GM12878 (cell line): ENCODE measurements at regions of chr3 and their contacts with region 1.

Region 1: DNA sequence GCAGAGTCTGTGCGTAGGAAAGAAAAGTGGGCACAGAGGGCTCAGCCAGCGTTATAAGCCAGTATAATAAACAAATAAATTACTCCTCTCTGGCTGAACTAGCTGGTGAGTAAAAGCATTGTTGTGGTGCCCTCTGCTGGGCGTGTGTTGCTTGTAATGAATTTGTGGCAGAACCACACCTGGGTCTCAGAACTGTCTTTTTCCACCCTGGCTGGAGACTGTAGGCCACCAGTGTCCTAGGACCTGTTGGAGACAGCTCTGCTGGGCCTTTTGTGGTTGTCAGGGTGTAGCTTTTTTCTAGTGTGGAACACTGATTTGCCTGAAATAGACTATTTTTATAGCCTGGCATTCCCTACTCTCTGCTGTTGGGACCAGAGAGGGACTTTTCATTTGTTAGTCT is 130.5 kb upstream of the EIF1B start:
- DNase-seq: no peak
- ATAC-seq: peak; percentile 92
- H3K4me3 ChIP-seq: no peak overlapping the region
- H3K27ac ChIP-seq: no peak overlapping the region
- H3K4me1 ChIP-seq: no peaks in the 10 kb centered on the region
- H3K27me3 ChIP-seq: no peaks in the 10 kb centered on the region; a peak in 1 of 4 replicates
- CTCF ChIP-seq: peak; percentile 68 to 73 (median 71)
- EP300 ChIP-seq: no peak
- POLR2A ChIP-seq: no peak
- RAD21 ChIP-seq: peak; percentile 79

Region 2: GRCh38 chr3:39447637-39448483 is 731.2 kb before region 1 on chr3:
- CTCF ChIA-PET with region 1: interaction called, 3 read pairs
- POLR2A ChIA-PET with region 1: no interaction called
- RAD21 ChIA-PET with region 1: no interaction called
- SMC1A ChIA-PET with region 1: no interaction called
- in situ Hi-C with region 1: no loop called
- intact Hi-C with region 1: loop called (anchors 10 kb)
- DNase-seq: peak; percentile 25
- ATAC-seq: peak; percentile 98
- H3K4me3 ChIP-seq: no peak overlapping the region
- H3K27ac ChIP-seq: no peak overlapping the region
- H3K4me1 ChIP-seq: no peaks in the 10 kb centered on the region
- H3K27me3 ChIP-seq: no peaks in the 10 kb centered on the region; a peak in 1 of 4 replicates
- CTCF ChIP-seq: peak; percentile 73 to 92 (median 87)
- EP300 ChIP-seq: no peak
- POLR2A ChIP-seq: no peak
- RAD21 ChIP-seq: peak; percentile 69

Region 3: DNA sequence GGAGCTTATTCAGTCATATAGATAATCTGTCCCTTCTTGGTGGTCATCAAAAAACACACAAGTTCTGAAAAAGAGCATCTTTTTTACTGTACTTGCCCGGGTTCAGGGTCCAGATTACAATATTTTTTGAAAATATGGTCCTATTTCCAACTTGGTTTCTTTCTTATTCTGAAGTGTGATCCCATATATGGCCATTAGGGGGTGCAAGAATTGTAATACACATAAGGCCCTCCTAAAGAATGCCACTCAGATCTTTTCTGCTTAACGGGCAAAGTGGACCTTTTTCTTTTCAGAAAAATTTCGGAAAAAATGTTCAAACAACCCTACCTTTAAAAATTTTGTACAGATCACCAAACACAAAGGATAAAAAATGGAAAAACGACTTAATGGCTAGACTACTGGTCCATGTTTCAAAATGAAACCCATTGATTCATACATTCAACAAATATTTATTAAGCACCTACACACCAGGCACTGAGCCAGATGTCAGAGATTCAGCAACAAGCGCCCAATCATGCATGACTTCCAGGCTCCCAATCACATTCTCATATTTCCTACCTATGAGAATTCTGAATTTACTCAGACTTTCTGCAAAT is 471.6 kb before region 1 on chr3:
- CTCF ChIA-PET with region 1: interaction called, 6 read pairs
- POLR2A ChIA-PET with region 1: no interaction called
- RAD21 ChIA-PET with region 1: no interaction called
- SMC1A ChIA-PET with region 1: interaction called, 3 read pairs
- in situ Hi-C with region 1: loop called (anchors 5 kb)
- intact Hi-C with region 1: loop called (anchors 5 kb)
- DNase-seq: no peak
- ATAC-seq: peak; percentile 73
- H3K4me3 ChIP-seq: no peak overlapping the region
- H3K27ac ChIP-seq: no peak overlapping the region
- H3K4me1 ChIP-seq: no peaks in the 10 kb centered on the region
- H3K27me3 ChIP-seq: no peaks in the 10 kb centered on the region
- CTCF ChIP-seq: peak; percentile 56 to 59 (median 57)
- EP300 ChIP-seq: no peak
- POLR2A ChIP-seq: no peak
- RAD21 ChIP-seq: peak; percentile 53

Region 4: DNA sequence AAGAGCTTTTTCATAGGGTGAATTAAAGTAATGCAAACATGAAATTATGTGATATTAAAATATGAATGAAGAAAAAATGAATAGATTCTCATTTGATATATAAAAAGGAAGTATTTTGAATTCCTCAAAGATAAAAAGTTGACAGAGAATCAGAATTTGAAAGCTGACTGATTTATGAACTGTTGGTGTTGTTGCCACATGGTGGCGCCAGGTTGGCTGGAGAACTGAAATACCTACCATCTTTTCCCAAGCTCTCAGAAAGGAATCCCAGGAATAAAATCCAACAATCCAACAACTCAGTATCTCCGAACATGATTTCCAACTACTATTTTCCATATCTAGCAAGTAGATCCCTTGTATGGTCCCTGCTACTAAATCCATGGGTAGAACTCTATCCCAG is 366.5 kb before region 1 on chr3:
- CTCF ChIA-PET with region 1: interaction called, 34 read pairs
- POLR2A ChIA-PET with region 1: no interaction called
- RAD21 ChIA-PET with region 1: interaction called, 5 read pairs
- SMC1A ChIA-PET with region 1: no interaction called
- in situ Hi-C with region 1: loop called (anchors 10 kb)
- intact Hi-C with region 1: loop called (anchors 1 kb)
- DNase-seq: no peak
- ATAC-seq: no peak
- H3K4me3 ChIP-seq: no peak overlapping the region
- H3K27ac ChIP-seq: no peak overlapping the region
- H3K4me1 ChIP-seq: no peaks in the 10 kb centered on the region
- H3K27me3 ChIP-seq: peaks cover 12 to 16% of the 10 kb centered on the region in 2 experiments
- CTCF ChIP-seq: peak; percentile 29 to 33 (median 31); a peak in 4 of 6 replicates
- EP300 ChIP-seq: no peak
- POLR2A ChIP-seq: no peak
- RAD21 ChIP-seq: peak; percentile 9; the same call in 1 of the 2 replicates

Region 5: GRCh38 chr3:40211579-40211978 is 32.6 kb after region 1 on chr3:
- CTCF ChIA-PET with region 1: no interaction called
- POLR2A ChIA-PET with region 1: no interaction called
- RAD21 ChIA-PET with region 1: no interaction called
- SMC1A ChIA-PET with region 1: no interaction called
- in situ Hi-C with region 1: no loop called
- intact Hi-C with region 1: no loop called
- DNase-seq: no peak
- ATAC-seq: no peak
- H3K4me3 ChIP-seq: no peak overlapping the region
- H3K27ac ChIP-seq: no peak overlapping the region
- H3K4me1 ChIP-seq: no peaks in the 10 kb centered on the region
- H3K27me3 ChIP-seq: no peaks in the 10 kb centered on the region
- CTCF ChIP-seq: no peak
- EP300 ChIP-seq: no peak
- POLR2A ChIP-seq: no peak
- RAD21 ChIP-seq: no peak

Region 6: GRCh38 chr3:41881233-41881821 is 1702.3 kb after region 1 on chr3:
- CTCF ChIA-PET with region 1: no interaction called
- POLR2A ChIA-PET with region 1: no interaction called
- RAD21 ChIA-PET with region 1: no interaction called
- SMC1A ChIA-PET with region 1: no interaction called
- in situ Hi-C with region 1: loop called (anchors 25 kb)
- intact Hi-C with region 1: no loop called
- DNase-seq: no peak
- ATAC-seq: no peak
- H3K4me3 ChIP-seq: no peak overlapping the region
- H3K27ac ChIP-seq: no peak overlapping the region
- H3K4me1 ChIP-seq: no peaks in the 10 kb centered on the region
- H3K27me3 ChIP-seq: no peaks in the 10 kb centered on the region
- CTCF ChIP-seq: peak; percentile 44 to 58 (median 57); a peak in 5 of 6 replicates
- EP300 ChIP-seq: no peak
- POLR2A ChIP-seq: no peak
- RAD21 ChIP-seq: peak; percentile 81